ENCODE measurements at regions of chr20 and their contacts with region 1.

Region 1: DNA sequence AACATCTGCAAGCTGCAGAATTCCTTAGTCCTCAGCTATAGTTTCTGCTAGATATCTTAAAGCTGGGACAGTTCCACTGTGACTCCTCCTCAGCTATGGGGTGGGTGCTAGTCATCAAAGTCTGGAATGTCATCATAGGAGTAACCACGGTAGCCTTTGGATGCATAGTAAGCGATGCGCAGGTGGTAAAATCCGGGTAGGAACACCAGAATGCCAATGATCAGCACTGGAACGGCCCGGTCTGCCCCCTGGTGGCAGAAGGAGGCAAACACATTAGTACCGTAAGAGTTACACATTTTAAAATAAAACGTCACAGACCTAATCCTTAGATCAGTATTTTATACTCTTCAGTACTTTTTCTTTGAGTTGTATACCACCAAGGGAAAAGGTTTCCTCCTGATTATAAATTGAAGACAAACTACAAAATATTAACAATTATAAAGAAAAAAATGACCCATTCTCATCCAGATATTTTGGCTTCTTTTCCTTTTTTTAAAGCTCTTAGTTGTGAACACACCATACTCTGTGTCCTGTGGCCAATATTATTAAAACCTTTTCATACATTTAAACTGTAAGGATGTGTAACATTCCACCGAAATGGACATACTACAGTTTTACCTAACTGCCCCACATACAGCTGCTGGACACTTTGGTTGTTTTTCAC is 18.9 kb downstream of the PCNA start:
- DNase-seq: peak; percentile 50 to 83 (median 67)
- ATAC-seq: peak; percentile 51 to 82 (median 78)
- H3K4me3 ChIP-seq: no peak overlapping the region
- H3K27ac ChIP-seq: no peak overlapping the region
- H3K4me1 ChIP-seq: peaks cover 0 to 11% (median 0%) of the 10 kb centered on the region in 12 donors
- H3K27me3 ChIP-seq: no peaks in the 10 kb centered on the region
- CTCF ChIP-seq: peak; percentile 87 to 96 (median 91)
- POLR2A ChIP-seq: no peak

Region 2: GRCh38 chr20:4601630-4602296 is 499.1 kb before region 1 on chr20:
- intact Hi-C with region 1: loop called in 7 of 10 experiments (anchors 5 kb)
- DNase-seq: peak; percentile 81 to 89 (median 85)
- ATAC-seq: peak; percentile 94 to 97 (median 95)
- H3K4me3 ChIP-seq: no peak overlapping the region
- H3K27ac ChIP-seq: peak overlapping the region in 10 of 12 donors; percentile 25 to 77 (median 62)
- H3K4me1 ChIP-seq: peaks cover 0 to 16% (median 0%) of the 10 kb centered on the region in 12 donors
- H3K27me3 ChIP-seq: peaks cover 0 to 15% (median 0%) of the 10 kb centered on the region in 9 donors
- CTCF ChIP-seq: peak in 1 of 12 donors; percentile 4
- POLR2A ChIP-seq: no peak

Region 3: DNA sequence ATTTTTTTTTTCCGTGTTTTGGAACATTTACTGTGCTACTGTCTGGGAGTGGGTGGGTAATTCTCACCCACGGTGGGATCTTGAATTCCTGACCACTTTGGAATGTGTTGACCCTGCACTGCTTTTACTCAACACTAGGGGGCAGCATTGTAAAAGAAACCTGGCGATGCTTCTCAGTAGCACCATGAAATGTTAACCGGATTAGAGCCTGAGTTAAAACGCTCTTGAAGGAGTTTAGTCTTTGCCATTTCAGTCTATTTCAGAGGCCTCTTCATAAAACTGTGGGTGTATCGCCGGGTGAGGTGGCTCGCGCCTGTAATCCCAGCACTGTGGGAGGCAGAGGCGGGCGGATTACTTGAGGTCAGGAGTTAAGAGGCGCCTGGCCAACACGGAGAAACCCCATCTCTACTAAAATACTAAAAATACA is 493.5 kb before region 1 on chr20:
- intact Hi-C with region 1: loop called in 8 of 10 experiments (anchors 5 kb)
- DNase-seq: peak in 3 of 5 donors; percentile 39 to 44 (median 41)
- ATAC-seq: peak; percentile 69 to 78 (median 76)
- H3K4me3 ChIP-seq: no peak overlapping the region
- H3K27ac ChIP-seq: no peak overlapping the region
- H3K4me1 ChIP-seq: peaks cover 0 to 7% (median 0%) of the 10 kb centered on the region in 12 donors
- H3K27me3 ChIP-seq: peaks cover 0 to 12% (median 0%) of the 10 kb centered on the region in 9 donors
- CTCF ChIP-seq: peak; percentile 88 to 98 (median 94)
- POLR2A ChIP-seq: no peak

Region 4: DNA sequence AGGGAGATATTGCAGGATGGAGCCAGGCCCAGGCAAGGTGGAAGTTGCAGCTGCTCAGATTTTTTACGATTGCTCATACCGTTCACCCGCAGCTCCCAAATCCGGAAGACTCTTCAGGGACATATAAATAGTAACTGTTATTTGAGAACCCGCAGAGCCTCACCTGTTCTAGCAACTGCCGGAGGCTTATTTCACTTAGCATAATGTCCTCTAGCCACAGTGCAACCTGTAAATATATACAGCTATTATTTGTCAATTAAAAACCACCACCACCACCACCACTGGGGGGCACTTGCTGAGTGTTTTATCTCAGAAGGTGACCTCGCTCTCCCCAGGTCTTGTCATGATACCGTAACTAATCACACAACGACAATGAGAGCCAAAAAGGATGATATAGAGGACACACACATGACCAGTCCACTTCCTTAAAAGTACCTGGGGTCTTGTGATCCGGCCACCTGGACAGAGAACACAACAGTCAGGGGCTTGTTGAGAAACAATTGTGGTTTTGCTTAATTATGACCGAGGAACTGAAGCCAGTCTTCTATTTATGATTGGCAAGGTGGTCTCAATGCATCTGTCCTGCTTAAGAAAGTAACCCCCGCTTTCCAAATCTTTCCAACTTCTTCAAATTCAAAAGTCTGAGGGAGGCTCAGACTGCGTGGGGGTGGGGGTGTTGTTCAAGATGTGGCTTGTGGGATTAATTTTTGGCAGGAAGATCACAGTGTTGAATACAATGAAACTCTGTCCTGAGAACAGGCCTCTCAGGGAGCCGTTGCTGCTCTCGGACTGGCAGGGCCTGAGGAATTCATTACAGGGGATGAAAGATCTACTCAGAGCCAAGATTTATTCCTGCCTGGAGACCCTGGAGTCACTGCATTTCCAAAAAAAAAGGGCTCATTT is 486.8 kb before region 1 on chr20:
- intact Hi-C with region 1: loop called in 7 of 10 experiments (anchors 5 kb)
- DNase-seq: peak in 3 of 5 donors; percentile 48 to 67 (median 51)
- ATAC-seq: peak; percentile 37 to 80 (median 59)
- H3K4me3 ChIP-seq: no peak overlapping the region
- H3K27ac ChIP-seq: peak overlapping the region in 9 of 12 donors; percentile 32 to 66 (median 54)
- H3K4me1 ChIP-seq: peaks cover 0 to 20% (median 10%) of the 10 kb centered on the region in 12 donors
- H3K27me3 ChIP-seq: no peaks in the 10 kb centered on the region
- CTCF ChIP-seq: peak in 9 of 12 donors; percentile 18 to 51 (median 36)
- POLR2A ChIP-seq: no peak

Region 5: DNA sequence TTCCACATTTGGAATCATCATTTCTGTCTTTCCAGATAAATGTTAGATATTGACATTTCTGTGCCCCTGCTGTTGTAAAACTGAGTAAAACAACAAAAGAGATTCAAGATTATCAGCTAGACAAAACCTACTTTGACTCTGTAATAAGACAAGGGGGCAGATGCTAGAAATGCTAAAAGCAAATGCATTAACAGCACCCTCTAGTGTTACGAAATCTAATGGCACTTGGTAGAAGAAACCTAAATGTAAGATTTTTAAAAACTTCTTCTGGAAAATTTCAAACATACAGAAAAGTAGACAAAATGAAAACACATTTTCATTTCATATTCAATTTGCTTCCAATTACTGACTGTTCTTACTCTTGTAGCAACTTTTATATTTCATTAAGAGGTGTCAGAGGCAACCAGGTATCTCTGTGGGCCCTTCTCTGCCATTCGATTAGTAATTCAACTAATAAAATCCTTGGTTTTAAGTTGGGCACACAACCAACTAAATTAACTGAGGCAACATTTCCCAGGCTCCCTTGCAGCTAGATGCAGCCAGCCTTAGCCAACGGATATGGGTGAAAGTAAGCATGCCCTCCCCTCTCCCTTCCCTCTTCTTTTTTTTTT is 144.5 kb before region 1 on chr20:
- intact Hi-C with region 1: loop called in 8 of 10 experiments (anchors 5 to 10 kb)
- DNase-seq: no peak
- ATAC-seq: no peak
- H3K4me3 ChIP-seq: no peak overlapping the region
- H3K27ac ChIP-seq: no peak overlapping the region
- H3K4me1 ChIP-seq: peaks cover 0 to 16% (median 1%) of the 10 kb centered on the region in 12 donors
- H3K27me3 ChIP-seq: no peaks in the 10 kb centered on the region
- CTCF ChIP-seq: peak; percentile 73 to 89 (median 83)
- POLR2A ChIP-seq: no peak

Measured in heart left ventricle (tissue), 16 donors.